ENCODE measurements at regions of chr7 and their contacts with region 1.

Region 1: GRCh38 chr7:17965603-17966002 is 25.3 kb upstream of the SNX13 start:
- DNase-seq: peak; percentile 44
- H3K4me3 ChIP-seq: no peak overlapping the region
- H3K27ac ChIP-seq: no peak overlapping the region
- H3K4me1 ChIP-seq: no peaks in the 10 kb centered on the region
- H3K27me3 ChIP-seq: no peaks in the 10 kb centered on the region

Region 2: DNA sequence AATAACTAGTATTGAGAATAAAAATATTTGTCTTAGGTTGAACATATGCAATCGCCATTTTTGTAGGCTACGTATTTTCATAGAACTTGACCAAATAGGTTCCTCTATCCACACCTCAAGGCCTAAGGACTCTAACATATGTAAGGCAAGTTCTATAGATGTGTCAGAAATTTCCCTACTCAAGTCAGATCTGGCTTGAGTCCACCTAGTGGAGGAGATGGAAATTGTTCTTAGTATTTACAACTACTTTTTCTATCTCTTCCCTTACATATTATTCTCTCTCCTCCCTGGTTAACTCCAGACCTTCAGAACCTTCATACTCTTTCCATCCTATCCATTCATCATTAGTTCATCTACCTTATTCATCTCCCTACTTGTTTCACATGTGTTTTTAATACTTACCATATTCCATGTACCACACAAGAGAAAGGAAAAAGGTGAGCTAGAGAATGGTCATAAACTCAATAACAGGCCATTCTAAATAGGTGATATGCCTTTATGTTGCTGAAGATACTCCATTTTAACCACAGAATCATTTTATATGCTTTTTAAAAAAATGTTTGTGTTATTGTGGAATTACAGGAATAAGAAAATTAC is 355.5 kb after region 1 on chr7:
- in situ Hi-C with region 1: loop called (anchors 10 kb)
- DNase-seq: peak; percentile 71
- H3K4me3 ChIP-seq: no peak overlapping the region
- H3K27ac ChIP-seq: no peak overlapping the region
- H3K4me1 ChIP-seq: peaks cover 4% of the 10 kb centered on the region; the same call in 1 of the 2 replicates
- H3K27me3 ChIP-seq: no peaks in the 10 kb centered on the region

Measured in GM23248 (cell line).